OCI-LY7 (cell line): ENCODE measurements at regions of chr11 and their contacts with region 1.

Region 1: GRCh38 chr11:125887373-125888324 is at the start of gene HYLS1:
- DNase-seq: peak; percentile 98
- H3K4me3 ChIP-seq: peak within 1 kb of the TSS; percentile 83
- H3K27ac ChIP-seq: peak within 1 kb of the TSS; percentile 87
- H3K4me1 ChIP-seq: peaks cover 47% of the 10 kb centered on the region
- CTCF ChIP-seq: peak; percentile 57
- total RNA-seq, gene HYLS1: 25.1 and 31.5 TPM in 2 replicates

Region 2: DNA sequence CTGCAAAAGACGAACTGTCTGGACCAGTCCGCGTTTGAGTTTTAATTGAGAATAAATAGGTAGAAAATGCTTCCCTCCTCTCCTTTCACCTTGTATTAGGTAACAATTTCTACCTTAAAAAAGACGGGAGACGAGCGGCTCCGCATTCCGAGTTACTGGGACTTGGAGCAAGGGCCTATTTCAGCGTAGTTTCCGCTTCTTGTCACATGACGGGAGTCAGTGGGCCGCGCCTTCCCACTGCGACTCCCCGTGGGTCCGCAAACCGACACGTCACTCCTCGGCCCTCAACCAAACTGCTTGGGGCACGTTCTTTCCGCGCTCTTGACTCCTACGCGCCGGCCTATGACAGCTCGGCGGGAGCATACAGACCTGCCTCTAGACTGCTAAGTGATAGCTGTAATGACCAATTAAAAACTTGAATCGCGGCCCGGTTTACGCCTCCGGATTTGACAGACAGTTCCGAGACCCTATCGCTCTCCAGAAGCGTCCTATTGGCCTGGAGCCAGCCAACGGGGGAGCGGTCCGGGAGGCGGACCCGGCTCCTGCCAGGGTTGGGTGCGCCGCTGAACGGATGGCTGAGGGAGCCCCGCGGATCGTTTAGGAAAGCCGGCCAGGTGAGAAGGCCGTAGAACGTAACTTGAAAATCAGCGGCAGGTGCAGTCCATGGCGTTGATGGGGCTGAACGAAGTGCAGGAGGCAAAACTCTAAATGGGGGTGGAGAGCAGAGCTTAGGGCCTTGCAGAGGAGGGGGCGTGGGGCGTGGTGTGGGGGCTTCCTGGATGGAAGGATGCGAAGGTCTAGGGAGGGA is 295.1 kb before region 1 on chr11 and contains the start of gene STT3A:
- CTCF ChIA-PET with region 1: interaction called, 4 read pairs
- POLR2A ChIA-PET with region 1: interaction called, 13 read pairs
- intact Hi-C with region 1: no loop called
- DNase-seq: peak; percentile 99
- H3K4me3 ChIP-seq: peak within 1 kb of the TSS; percentile 90
- H3K27ac ChIP-seq: peak within 1 kb of the TSS; percentile 78
- H3K4me1 ChIP-seq: peaks cover 25% of the 10 kb centered on the region
- CTCF ChIP-seq: no peak
- total RNA-seq, gene STT3A: 60.6 and 87.9 TPM in 2 replicates

Region 3: DNA sequence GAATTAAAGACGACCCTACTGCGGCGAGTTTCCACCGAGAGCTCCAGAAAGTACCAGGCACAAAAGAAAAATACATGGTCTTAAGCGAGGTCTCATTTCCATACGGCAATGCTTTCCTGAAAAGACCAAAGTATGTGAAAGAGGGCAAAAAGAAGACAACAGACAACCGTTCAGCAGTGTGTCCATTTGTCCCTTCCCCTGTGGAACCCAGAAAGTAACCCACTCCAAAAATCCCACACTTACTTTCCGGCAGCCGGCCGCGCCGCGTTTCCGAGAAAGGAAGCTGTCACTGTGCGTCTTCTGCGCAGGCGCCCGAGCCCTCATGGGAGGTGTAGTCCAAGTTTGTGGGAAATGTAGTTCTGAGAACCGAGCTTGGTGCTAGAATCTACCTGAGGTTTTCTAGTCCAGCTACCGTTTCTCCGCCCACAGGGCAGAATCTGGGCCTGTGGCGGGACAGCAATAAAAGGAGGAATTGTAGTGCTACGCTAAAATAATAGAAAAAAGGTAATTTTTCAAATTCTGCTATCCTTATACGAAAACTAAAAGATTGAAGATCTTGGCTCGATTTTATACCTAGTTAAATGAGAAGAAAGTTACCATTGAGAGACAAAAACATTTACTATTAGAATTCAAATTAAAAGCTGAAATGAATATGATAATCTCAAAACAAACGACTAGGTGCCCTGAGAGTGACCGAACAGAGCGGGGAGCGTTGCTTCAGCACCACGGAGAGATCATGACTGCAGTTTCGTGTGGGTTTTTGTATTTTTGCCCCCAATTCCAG is 15.5 kb after region 1 on chr11 and contains the start of gene PUS3:
- CTCF ChIA-PET with region 1: interaction called, 8 read pairs
- POLR2A ChIA-PET with region 1: interaction called, 19 read pairs
- intact Hi-C with region 1: no loop called
- DNase-seq: peak; percentile 84
- H3K4me3 ChIP-seq: peak within 1 kb of the TSS; percentile 86
- H3K27ac ChIP-seq: peak within 1 kb of the TSS; percentile 17
- H3K4me1 ChIP-seq: peaks cover 8% of the 10 kb centered on the region
- CTCF ChIP-seq: no peak
- total RNA-seq, gene PUS3: 7.7 and 8.6 TPM in 2 replicates